ENCODE measurements at regions of chr1 and their contacts with region 1.

Region 1: GRCh38 chr1:236281654-236282424 is at the start of gene ERO1B:
- DNase-seq: peak; percentile 96 to 98
- ATAC-seq: peak; percentile 99 to 100 (median 100)
- H3K4me3 ChIP-seq: peak within 1 kb of the TSS; percentile 69 to 99 (median 94)
- H3K27ac ChIP-seq: peak within 1 kb of the TSS in 9 of 10 donors; percentile 77 to 90 (median 87)
- H3K4me1 ChIP-seq: peaks cover 0 to 28% (median 13%) of the 10 kb centered on the region in 9 donors
- H3K27me3 ChIP-seq: peaks cover 0 to 6% (median 0%) of the 10 kb centered on the region in 7 donors
- CTCF ChIP-seq: peak in 2 of 9 donors; percentile 13 to 29
- total RNA-seq, gene ERO1B: 4.0 to 7.0 (median 5.6) TPM

Region 2: GRCh38 chr1:236113324-236114032 is 168.4 kb before region 1 on chr1:
- intact Hi-C with region 1: loop called in 4 of 10 experiments (anchors 10 kb)
- DNase-seq: peak in 1 of 2 donors; percentile 18
- ATAC-seq: peak; percentile 38 to 92 (median 77)
- H3K4me3 ChIP-seq: no peak overlapping the region
- H3K27ac ChIP-seq: peak overlapping the region in 9 of 10 donors; percentile 46 to 84 (median 72)
- H3K4me1 ChIP-seq: peaks cover 0 to 5% (median 0%) of the 10 kb centered on the region in 9 donors
- H3K27me3 ChIP-seq: no peaks in the 10 kb centered on the region
- CTCF ChIP-seq: no peak

Region 3: GRCh38 chr1:236142253-236143103 is 139.4 kb before region 1 on chr1 and contains the start of gene GPR137B:
- intact Hi-C with region 1: loop called in 2 of 10 experiments (anchors 5 to 10 kb)
- DNase-seq: peak; percentile 45 to 58
- ATAC-seq: peak; percentile 23 to 80 (median 52)
- H3K4me3 ChIP-seq: peak within 1 kb of the TSS; percentile 38 to 97 (median 76)
- H3K27ac ChIP-seq: peak within 1 kb of the TSS in 9 of 10 donors; percentile 22 to 90 (median 59)
- H3K4me1 ChIP-seq: peaks cover 6 to 53% (median 33%) of the 10 kb centered on the region in 9 donors
- H3K27me3 ChIP-seq: peaks cover 0 to 24% (median 0%) of the 10 kb centered on the region in 7 donors
- CTCF ChIP-seq: no peak
- total RNA-seq, gene GPR137B: 24.5 to 51.4 (median 35.5) TPM

Region 4: DNA sequence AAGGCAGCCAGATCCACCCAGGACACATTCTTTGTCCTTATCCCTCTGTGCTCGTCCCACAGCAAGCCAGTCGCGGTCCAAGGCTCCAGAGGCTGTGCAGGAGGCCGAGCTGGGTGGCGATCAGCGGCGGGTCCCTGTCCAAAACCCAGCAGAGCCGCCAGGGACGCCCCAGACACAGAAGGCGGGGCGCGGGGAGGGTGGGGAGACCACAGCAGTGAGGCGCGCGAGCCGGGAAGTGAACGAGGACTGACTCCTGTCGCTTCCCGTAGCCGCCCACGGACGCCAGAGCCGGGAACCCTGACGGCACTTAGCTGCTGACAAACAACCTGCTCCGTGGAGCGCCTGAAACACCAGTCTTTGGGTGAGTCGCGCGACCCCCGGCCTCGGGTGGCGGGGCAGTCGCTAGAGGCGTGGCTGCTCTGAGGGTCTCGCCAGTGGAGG is 241.9 kb after region 1 on chr1 and contains the start of gene LGALS8:
- intact Hi-C with region 1: loop called in 1 of 10 experiments (anchors 10 kb)
- DNase-seq: peak; percentile 92
- ATAC-seq: peak; percentile 94 to 98 (median 96)
- H3K4me3 ChIP-seq: peak within 1 kb of the TSS; percentile 54 to 100 (median 90)
- H3K27ac ChIP-seq: peak within 1 kb of the TSS; percentile 53 to 99 (median 94)
- H3K4me1 ChIP-seq: peaks cover 2 to 21% (median 17%) of the 10 kb centered on the region in 9 donors
- H3K27me3 ChIP-seq: no peaks in the 10 kb centered on the region
- CTCF ChIP-seq: peak in 1 of 9 donors; percentile 23
- total RNA-seq, gene LGALS8: 56.4 to 107 (median 90.5) TPM

Region 5: DNA sequence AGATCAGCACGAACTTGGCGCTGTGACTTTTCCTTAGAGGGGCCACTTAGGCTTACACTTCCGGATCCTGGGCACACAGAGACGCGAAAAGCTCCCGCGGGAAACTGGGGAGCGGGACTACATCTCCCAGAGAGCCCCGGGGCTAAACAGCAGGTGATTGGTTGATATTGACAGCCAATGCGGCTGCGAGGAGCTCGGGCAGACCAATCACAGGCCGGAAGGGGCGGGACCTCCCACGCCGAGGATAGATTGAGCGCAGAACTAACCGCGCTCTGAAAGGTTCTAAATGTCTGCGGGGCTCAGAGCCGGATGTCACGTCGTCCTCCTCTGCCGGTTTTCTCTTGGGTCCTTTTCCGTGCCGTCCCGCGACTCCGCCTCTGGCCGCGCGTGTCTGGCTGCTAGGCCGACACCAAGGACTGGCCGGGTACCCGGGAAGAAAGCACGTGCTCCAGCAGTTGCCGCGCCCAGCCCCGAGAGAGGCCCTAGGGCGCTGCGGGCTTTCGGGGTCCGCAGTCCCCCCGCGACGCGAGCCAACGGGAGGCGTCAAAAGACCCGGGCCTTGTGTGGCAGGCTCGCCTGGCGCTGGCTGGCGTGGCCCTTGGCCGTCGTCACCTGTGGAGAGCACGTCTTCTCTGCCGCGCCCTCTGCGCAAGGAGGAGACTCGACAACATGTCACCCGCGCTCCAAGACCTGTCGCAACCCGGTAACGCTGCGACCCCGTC is 513.4 kb after region 1 on chr1 and contains the start of gene MTR:
- intact Hi-C with region 1: loop called in 3 of 10 experiments (anchors 10 kb)
- DNase-seq: peak; percentile 97 to 99
- ATAC-seq: peak; percentile 98 to 99 (median 99)
- H3K4me3 ChIP-seq: peak within 1 kb of the TSS; percentile 65 to 98 (median 89)
- H3K27ac ChIP-seq: peak within 1 kb of the TSS; percentile 85 to 97 (median 94)
- H3K4me1 ChIP-seq: peaks cover 0 to 45% (median 35%) of the 10 kb centered on the region in 9 donors
- H3K27me3 ChIP-seq: peaks cover 0 to 5% (median 0%) of the 10 kb centered on the region in 7 donors
- CTCF ChIP-seq: no peak
- total RNA-seq, gene MTR: 39.4 to 100 (median 71.6) TPM